Activated B cell treated with CpG ODN at 0.5 μM for 24 hours (primary cell): ENCODE measurements at regions of chr18 and their contacts with region 1.

Region 1: GRCh38 chr18:31977270-31977872 is 34.4 kb upstream of the TRAPPC8 start:
- DNase-seq: no peak
- ATAC-seq: peak; percentile 25
- H3K4me3 Mint-ChIP-seq: no peak overlapping the region
- H3K27ac Mint-ChIP-seq: no peak overlapping the region
- H3K4me1 Mint-ChIP-seq: no peaks in the 10 kb centered on the region
- H3K27me3 Mint-ChIP-seq: no peaks in the 10 kb centered on the region
- CTCF ChIP-seq: no peak

Region 2: DNA sequence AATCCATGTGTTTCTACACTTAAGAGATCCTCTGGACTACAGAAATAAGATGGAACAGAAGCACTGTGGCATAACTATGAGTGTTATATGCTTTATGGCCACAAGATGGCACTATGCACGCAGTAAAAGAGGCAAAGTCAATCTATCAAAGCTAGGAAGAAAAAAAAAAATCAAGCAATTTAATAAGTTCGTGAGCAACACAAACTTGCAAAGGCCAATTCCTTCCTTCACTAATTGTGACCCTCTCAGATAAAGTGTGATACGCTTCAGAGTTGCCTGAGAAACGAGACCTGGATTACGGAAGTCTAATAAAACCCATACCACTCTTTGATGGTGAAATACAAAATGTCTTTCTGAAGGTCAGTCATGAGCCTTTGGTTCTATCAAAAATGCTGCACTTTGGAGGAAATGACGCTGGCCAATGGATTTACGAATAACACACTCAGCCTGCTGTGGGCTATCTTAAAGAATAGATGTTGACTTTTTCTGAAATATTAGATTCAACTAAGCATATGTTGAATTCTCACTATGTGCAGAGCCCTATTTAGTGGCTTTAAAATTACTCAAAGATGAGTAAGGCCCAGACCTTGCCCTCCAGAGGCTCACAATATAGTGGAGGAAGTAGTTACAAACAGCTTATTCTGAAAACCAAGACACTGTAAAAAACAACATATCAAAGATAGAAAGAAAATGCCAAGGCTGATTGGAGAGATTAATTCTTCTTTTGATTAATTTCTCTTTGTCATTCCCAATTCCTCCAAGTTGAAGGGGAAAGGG is 421.2 kb before region 1 on chr18:
- CTCF ChIA-PET with region 1: interaction called, 12 read pairs
- POLR2A ChIA-PET with region 1: no interaction called
- intact Hi-C with region 1: loop called (anchors 1 kb)
- DNase-seq: no peak
- ATAC-seq: peak; percentile 40
- H3K4me3 Mint-ChIP-seq: no peak overlapping the region
- H3K27ac Mint-ChIP-seq: no peak overlapping the region
- H3K4me1 Mint-ChIP-seq: no peaks in the 10 kb centered on the region
- H3K27me3 Mint-ChIP-seq: peaks cover 4% of the 10 kb centered on the region
- CTCF ChIP-seq: peak; percentile 31